A673 (cell line): ENCODE measurements at regions of chr13 and their contacts with region 1.

Region 1: DNA sequence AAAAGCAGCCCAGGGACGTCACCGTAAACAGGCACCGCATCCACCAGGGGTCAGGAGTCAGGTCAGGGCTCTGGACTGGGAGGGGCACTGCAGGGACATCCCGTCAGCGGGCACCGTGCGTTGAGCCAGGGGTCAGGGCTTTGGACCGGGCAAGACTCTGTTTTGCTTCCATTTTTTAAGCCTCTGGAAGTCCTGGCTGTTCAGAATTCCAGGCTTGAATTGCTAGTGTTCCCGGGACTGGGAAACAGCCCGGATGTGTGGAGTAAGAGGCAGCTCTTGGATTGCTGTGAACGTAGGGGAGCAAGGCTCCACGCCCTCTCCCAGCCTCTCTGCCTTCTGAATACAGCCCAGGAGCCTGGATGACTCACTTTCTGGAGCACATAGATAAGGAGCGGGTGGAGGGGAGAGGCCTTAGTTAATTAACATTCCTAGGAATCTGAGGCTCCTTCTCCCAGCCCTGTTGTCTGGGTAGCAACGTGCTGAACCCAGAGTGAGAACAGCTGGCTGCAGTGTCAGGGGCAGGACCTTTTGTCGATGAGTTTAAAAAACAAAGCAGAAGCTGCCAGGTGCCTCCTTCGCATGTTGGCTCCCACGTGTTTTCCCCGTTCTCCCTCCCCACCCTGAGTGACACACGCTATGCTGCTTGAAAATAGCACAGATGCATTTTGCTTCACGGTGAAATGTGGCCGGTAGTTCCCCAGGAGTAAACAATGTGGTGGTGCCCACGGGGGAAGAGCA is 21.9 kb downstream of the ATP11A start:
- DNase-seq: peak; percentile 75
- H3K4me3 ChIP-seq: no peak overlapping the region
- H3K27ac ChIP-seq: no peak overlapping the region
- H3K4me1 ChIP-seq: peaks cover 7% of the 10 kb centered on the region
- H3K27me3 ChIP-seq: no peaks in the 10 kb centered on the region
- CTCF ChIP-seq: no peak

Region 2: DNA sequence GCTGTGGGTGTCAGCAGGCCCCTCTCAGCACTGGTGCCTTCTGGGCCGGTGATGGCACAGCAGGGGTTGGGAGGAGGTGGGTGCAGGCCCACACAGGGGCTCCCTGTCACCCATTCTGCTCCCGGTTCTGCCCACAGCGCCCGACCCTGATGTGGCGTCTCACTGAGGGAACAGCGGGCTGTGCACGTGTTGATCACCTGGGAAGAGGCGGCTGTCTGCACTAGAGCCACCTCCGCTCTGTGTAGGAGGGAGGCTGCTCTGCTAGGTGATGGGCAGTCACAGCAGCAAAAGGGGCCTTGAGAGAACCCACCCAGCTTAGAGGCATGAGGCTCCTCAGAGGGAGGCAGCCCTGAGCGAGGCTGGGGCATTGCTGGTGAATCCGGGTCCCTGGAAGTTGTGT is 84.5 kb before region 1 on chr13:
- CTCF ChIA-PET with region 1: interaction called, 10 read pairs
- POLR2A ChIA-PET with region 1: no interaction called
- intact Hi-C with region 1: no loop called
- DNase-seq: no peak
- H3K4me3 ChIP-seq: no peak overlapping the region
- H3K27ac ChIP-seq: no peak overlapping the region
- H3K4me1 ChIP-seq: no peaks in the 10 kb centered on the region
- H3K27me3 ChIP-seq: peaks cover 30% of the 10 kb centered on the region
- CTCF ChIP-seq: no peak

Region 3: DNA sequence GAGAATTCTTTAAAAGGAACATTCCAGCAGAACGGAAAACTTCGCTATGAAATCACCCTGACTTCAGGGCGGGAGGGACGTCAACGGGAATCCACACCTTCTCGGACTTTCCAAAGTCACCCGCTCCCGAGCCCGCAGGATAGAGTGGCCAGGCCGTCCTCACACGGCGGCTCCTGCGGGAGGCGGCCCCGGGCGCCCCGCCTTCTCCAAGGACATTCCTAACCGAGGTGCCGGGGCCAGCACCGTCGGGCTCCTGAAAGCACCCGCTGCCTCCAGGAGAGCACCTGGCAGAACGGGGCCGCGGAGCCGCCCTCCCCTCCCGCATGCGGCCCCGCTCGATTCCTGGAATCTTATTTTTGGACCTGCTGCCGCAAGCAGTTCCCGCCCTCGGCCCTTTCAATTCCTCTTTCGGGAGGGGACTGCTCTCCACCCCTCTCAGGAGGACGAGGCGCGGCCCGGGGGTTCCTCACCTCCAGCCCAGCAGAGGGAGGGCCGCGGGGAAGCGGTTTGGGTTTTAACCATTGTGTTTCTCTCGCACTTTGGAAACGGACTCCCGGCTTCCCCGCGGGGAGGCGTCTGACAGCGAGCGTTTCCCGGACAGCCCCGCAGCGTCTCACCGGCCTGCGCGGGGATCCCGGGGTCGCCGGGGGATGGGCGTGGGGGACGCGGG is 1151.2 kb after region 1 on chr13:
- CTCF ChIA-PET with region 1: no interaction called
- POLR2A ChIA-PET with region 1: no interaction called
- intact Hi-C with region 1: no loop called
- DNase-seq: no peak
- H3K4me3 ChIP-seq: peak overlapping the region; percentile 48
- H3K27ac ChIP-seq: no peak overlapping the region
- H3K4me1 ChIP-seq: peaks cover 8% of the 10 kb centered on the region
- H3K27me3 ChIP-seq: peaks cover 38% of the 10 kb centered on the region
- CTCF ChIP-seq: no peak